ENCODE measurements at regions of chr2 and their contacts with region 1.

Region 1: GRCh38 chr2:199684168-199684567 is 166.8 kb downstream of the FTCDNL1 start:
- DNase-seq: no peak
- H3K4me3 ChIP-seq: no peak overlapping the region
- H3K27ac ChIP-seq: no peak overlapping the region
- H3K4me1 ChIP-seq: no peaks in the 10 kb centered on the region
- H3K27me3 ChIP-seq: no peaks in the 10 kb centered on the region
- CTCF ChIP-seq: peak in 1 of 3 experiments; percentile 34; a peak in 1 of 4 replicates
- EP300 ChIP-seq: no peak
- POLR2A ChIP-seq: no peak
- RAD21 ChIP-seq: 0 out of 4 replicates have a peak, but pooled peaks of 1 of the 2 experiments have one; percentile 8

Region 2: DNA sequence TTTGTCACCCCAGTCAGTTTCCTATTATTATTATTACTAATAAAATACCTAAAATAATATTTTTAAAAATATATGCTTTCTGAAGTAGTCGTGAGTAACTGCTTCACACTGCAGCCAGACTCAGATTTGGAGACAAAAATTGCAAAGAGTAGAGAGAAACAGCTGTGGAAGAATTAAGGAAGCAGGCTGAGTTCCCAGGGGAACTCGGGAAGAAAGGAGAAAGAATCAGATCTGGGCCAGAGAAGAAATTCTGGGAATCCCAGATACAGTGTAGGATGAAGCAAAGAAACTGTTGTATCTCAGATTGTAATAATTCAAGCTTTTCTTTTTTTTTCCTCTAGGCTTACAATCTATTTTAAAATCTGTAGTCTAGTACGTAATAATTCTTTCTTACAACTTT is 15.5 kb before region 1 on chr2:
- CTCF ChIA-PET with region 1: interaction called, 35 read pairs
- POLR2A ChIA-PET with region 1: no interaction called
- DNase-seq: no peak
- H3K4me3 ChIP-seq: no peak overlapping the region
- H3K27ac ChIP-seq: no peak overlapping the region
- H3K4me1 ChIP-seq: no peaks in the 10 kb centered on the region
- H3K27me3 ChIP-seq: peaks cover 0 to 1% (median 0%) of the 10 kb centered on the region in 4 experiments; a peak in 1 of 7 replicates
- CTCF ChIP-seq: no peak
- EP300 ChIP-seq: no peak
- POLR2A ChIP-seq: no peak
- RAD21 ChIP-seq: no peak

Measured in H1 (cell line).